ENCODE measurements at regions of chr18 and their contacts with region 1.

Region 1: DNA sequence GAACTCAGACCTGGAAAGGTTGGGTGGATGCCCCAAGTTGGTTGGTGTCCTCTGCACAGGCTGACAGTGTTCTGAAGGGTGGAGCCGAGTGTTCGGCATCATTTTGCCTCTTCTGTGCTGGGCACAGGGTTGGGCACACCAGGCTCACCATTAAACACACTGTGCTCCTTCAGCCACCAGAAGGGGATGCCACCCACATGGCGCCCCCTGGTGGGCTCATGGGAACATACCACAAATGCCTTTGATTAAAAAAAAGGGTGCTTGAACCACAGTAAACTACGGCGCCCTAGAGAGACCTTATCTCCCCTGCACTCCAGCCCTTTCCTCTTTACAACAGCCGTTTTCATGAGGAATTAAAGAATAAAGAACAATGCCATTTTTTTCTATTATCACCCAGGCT is 89.4 kb downstream of the CELF4 start:
- DNase-seq: peak; percentile 9
- H3K4me3 ChIP-seq: no peak overlapping the region
- H3K27ac ChIP-seq: no peak overlapping the region
- H3K4me1 ChIP-seq: no peaks in the 10 kb centered on the region
- H3K27me3 ChIP-seq: no peaks in the 10 kb centered on the region
- CTCF ChIP-seq: peak; percentile 31 to 61

Region 2: DNA sequence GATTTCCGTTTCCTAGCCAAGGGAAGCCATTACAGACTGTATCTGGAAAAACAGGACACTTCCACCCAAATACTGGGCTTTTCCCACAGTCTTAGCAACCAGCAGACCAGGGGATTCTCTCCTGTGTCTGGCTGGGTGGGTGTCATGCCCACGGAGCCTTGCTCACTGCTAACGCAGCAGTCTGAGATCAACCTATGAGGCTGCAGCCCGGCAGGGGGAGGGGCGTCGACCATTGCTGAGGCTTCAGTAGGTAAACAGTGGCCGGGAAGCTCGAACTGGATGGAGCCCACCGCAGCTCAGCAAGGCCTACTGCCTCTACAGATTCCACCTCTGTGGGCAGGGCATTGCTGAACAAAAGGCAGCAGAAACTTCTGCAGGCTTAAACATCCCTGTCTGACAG is 516.1 kb before region 1 on chr18:
- CTCF ChIA-PET with region 1: no interaction called
- dilution Hi-C with region 1: loop called (anchors 25 kb)
- in situ Hi-C with region 1: no loop called
- intact Hi-C with region 1: no loop called
- DNase-seq: no peak
- H3K4me3 ChIP-seq: no peak overlapping the region
- H3K27ac ChIP-seq: no peak overlapping the region
- H3K4me1 ChIP-seq: no peaks in the 10 kb centered on the region
- H3K27me3 ChIP-seq: no peaks in the 10 kb centered on the region
- CTCF ChIP-seq: no peak

Region 3: DNA sequence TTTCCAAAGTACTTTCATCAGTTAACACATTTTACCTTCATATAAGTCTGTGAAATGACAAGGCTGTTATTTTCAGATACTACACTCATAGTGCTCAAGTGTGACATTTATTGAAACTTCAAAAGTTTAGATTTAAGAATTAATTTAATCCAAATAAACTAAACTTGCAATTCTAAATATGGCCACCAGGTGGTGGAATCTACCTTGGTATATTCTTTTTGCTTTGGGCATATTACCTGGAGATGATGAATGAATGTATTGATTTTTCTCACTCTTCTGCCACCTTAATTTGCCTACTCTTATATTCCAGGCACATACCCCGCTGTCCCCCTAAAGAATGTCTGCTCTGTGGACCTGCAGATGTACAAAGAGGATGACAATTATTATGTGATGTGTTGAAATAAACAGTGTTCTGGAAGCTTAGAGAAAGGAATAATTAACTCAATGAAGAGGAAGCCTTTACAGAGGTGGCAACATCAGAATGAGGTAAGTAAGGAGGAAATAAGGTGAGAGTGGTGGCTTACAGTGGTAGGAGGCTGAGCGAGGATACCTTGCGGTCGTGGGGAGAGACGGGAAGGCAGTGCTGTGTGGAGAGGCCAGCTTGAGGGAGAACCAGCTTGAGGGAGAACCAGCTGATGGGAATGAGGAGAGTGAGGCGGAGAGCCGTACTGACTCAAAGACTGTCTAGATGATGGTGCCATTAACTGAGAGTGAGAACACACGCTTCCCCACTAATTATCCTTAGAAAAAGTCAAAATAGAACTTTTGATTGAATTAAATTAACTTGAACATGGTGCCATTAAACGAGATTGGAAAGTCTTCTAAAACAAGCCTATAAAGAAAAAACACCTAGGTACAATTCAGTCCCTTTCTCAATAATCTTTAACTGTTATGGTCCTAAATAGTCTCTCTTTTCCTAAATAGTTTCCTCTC is 90.1 kb before region 1 on chr18:
- CTCF ChIA-PET with region 1: no interaction called
- dilution Hi-C with region 1: no loop called
- in situ Hi-C with region 1: no loop called
- intact Hi-C with region 1: loop called (anchors 1 kb)
- DNase-seq: peak; percentile 8
- H3K4me3 ChIP-seq: no peak overlapping the region
- H3K27ac ChIP-seq: no peak overlapping the region
- H3K4me1 ChIP-seq: no peaks in the 10 kb centered on the region
- H3K27me3 ChIP-seq: no peaks in the 10 kb centered on the region
- CTCF ChIP-seq: peak; percentile 59 to 61

Region 4: GRCh38 chr18:37445368-37445767 is 30.8 kb before region 1 on chr18:
- CTCF ChIA-PET with region 1: no interaction called
- dilution Hi-C with region 1: no loop called
- in situ Hi-C with region 1: no loop called
- intact Hi-C with region 1: loop called (anchors 1 kb)
- DNase-seq: no peak
- H3K4me3 ChIP-seq: no peak overlapping the region
- H3K27ac ChIP-seq: no peak overlapping the region
- H3K4me1 ChIP-seq: no peaks in the 10 kb centered on the region
- H3K27me3 ChIP-seq: no peaks in the 10 kb centered on the region
- CTCF ChIP-seq: no peak

Region 5: GRCh38 chr18:37514953-37515352 is 38.8 kb after region 1 on chr18:
- CTCF ChIA-PET with region 1: no interaction called
- dilution Hi-C with region 1: loop called (anchors 5 kb)
- in situ Hi-C with region 1: no loop called
- intact Hi-C with region 1: no loop called
- DNase-seq: no peak
- H3K4me3 ChIP-seq: no peak overlapping the region
- H3K27ac ChIP-seq: no peak overlapping the region
- H3K4me1 ChIP-seq: no peaks in the 10 kb centered on the region
- H3K27me3 ChIP-seq: no peaks in the 10 kb centered on the region
- CTCF ChIP-seq: no peak